ENCODE measurements at regions of chr22 and their contacts with region 1.

Region 1: DNA sequence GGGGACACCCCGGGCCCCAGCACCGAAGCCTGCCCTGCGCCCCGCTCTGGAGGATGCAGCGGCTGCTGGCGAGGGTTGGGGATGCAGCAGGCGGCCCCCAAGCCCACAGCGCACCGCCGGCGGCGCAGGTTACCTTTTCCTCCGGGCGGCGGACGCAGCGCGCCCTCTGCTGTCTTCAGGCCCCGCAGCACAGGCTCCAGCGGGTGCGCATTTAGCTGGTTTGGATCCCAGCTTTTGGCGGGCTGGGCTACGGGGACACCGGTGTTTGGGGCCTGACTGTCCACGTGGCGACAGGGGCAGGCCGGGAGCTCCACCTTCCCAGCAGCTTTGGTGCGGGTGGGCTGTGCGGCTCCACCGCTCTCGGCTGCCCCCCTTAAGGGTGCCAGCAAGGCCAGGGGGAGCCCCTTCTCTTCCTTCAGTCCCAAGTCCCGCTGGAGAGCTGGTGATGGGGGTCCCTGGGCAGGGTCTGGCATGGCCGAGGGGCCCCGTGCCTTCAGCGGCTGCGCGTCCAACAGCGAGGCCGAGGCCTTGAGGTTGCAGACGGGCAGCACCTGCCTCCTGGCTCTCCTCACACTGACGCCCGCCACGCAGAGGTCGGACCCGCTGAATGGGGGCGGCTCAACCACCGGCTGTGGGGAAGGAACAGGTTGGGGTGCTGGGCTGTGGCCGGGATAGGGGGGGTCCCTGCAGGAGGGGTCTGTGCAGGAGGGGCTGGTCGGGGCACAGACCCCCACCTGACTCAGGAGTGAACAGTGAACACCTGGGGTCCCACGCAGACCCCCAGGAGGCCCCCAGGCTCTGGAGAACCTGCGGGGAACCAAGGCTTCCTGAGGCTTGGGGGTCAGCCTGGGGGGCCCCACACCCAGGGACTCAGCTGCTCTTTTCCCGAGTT is 18.0 kb upstream of the IL17REL start:
- DNase-seq: peak; percentile 97
- CTCF ChIP-seq: peak; percentile 87

Region 2: GRCh38 chr22:49767355-49768062 is 263.0 kb before region 1 on chr22:
- in situ Hi-C with region 1: loop called (anchors 25 kb)
- DNase-seq: peak; percentile 80
- CTCF ChIP-seq: peak; percentile 56

Region 3: GRCh38 chr22:49930739-49931412 is 99.7 kb before region 1 on chr22:
- in situ Hi-C with region 1: loop called (anchors 5 kb)
- DNase-seq: peak; percentile 78
- CTCF ChIP-seq: peak; percentile 81

Region 4: GRCh38 chr22:49948958-49949913 is 81.3 kb before region 1 on chr22:
- in situ Hi-C with region 1: no loop called
- DNase-seq: no peak
- CTCF ChIP-seq: no peak

Region 5: DNA sequence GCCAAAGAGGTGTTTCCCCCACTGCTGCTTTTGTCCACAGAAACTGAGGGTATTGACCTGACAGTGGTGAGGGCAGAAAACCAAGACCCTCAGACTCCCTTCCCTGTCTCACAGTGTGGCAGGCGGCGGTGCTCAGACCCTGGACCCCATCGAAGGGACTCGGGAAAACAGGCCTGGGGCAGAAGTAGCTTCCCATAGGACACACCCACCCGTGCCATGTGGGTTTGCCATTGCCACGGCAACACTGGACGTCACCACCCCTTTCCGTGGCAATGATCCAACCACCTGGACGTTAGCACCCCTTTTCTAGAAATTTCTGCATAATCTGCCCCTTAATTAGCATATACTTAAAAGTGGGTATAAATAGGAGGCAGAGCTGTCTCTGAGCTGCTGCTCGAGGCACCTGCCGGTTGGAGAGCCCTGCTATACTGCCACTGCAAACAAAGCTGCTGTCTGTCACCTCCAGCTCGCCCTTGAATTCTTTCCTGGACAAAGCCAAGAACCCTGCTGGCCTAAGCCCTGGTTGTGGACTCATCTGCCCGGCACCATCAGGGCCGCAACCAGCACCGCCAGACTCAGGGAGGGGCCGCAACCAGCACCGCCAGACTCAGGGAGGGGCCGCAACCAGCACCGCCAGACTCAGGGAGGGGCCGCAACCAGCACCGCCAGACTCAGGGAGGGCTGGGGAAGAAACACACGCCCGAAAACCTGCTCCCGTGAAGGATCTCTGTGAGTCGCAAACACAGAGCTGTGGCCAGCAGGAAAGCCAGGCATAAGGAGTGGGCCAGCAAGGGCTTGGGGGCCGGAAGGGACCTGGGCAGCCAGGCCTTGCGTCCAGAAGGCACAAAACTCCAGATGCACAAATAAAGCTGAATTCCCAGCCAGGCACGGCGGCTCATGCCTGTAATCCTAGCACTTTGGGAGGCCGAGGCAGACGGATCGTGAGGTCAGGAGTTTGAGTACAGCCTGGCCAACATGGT is 44.3 kb after region 1 on chr22:
- in situ Hi-C with region 1: no loop called
- DNase-seq: no peak
- CTCF ChIP-seq: no peak

Measured in GM13976 (cell line).